Naive thymus-derived CD4-positive, alpha-beta T cell (primary cell): ENCODE measurements at regions of chr19 and their contacts with region 1.

Region 1: GRCh38 chr19:45469132-45469944 is 1.5 kb downstream of the FOSB start:
- DNase-seq: peak; percentile 79 to 98 (median 97)
- ATAC-seq: peak; percentile 70
- H3K4me3 ChIP-seq: peak overlapping the region; percentile 99
- H3K4me3 Mint-ChIP-seq: peak overlapping the region; percentile 87 to 96 (median 94)
- H3K27ac ChIP-seq: peak overlapping the region; percentile 98
- H3K27ac Mint-ChIP-seq: peak overlapping the region; percentile 90 to 100 (median 99)
- H3K4me1 ChIP-seq: peaks cover 10 to 16% of the 10 kb centered on the region in 2 donors
- H3K4me1 Mint-ChIP-seq: peaks cover 5 to 39% (median 19%) of the 10 kb centered on the region in 7 donors
- H3K27me3 ChIP-seq: no peaks in the 10 kb centered on the region
- H3K27me3 Mint-ChIP-seq: peaks cover 9 to 57% (median 17%) of the 10 kb centered on the region in 5 donors

Region 2: DNA sequence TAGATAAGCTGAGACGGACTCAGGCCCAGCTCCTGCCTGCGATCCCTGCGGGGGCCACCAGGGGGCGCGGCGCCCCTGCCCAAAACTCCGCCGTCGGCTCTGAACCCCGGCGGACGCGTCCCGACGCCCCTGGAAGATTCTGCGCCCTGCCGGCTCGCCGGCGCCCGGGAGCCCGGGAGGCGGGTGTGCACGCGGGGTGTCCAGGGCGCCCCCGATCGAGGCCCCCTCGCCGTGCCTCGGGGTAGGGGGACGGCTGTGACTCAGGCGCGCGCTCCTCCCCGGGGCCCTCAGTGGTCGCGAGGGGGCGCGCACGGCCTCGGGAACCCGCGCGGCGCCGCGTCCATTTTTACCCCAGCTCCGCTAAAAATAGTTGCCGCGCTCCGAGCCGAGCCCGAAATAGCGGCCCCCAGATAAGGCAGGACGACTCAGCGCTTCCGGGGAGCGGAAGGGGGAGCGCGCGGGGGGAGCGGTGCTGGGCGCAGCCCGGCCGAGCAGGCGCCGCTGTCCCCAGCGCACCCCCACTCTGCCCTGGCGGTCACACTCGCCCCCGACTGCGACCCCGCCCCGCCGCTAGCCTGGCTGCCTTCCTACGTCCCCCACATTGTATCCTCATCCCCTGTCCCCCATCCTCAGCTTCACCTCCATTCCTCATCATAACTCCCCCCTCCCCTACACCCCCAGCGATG is 29.6 kb before region 1 on chr19:
- CTCF ChIA-PET with region 1: interaction called, 217 read pairs
- POLR2A ChIA-PET with region 1: interaction called, 7 read pairs
- intact Hi-C with region 1: loop called (anchors 1 kb)
- DNase-seq: peak; percentile 75 to 95 (median 86)
- ATAC-seq: peak; percentile 72
- H3K4me3 ChIP-seq: peak overlapping the region; percentile 57
- H3K4me3 Mint-ChIP-seq: peak overlapping the region; percentile 68 to 83 (median 77)
- H3K27ac ChIP-seq: peak overlapping the region; percentile 69
- H3K27ac Mint-ChIP-seq: peak overlapping the region in 4 of 9 donors; percentile 51 to 91 (median 74)
- H3K4me1 ChIP-seq: peaks cover 24% of the 10 kb centered on the region in 2 donors
- H3K4me1 Mint-ChIP-seq: peaks cover 26 to 35% (median 33%) of the 10 kb centered on the region in 7 donors
- H3K27me3 ChIP-seq: no peaks in the 10 kb centered on the region
- H3K27me3 Mint-ChIP-seq: peaks cover 0 to 5% (median 0%) of the 10 kb centered on the region in 5 donors

Region 3: GRCh38 chr19:45446320-45446763 is 23.0 kb before region 1 on chr19:
- CTCF ChIA-PET with region 1: interaction called, 217 read pairs
- POLR2A ChIA-PET with region 1: interaction called, 14 read pairs
- intact Hi-C with region 1: loop called (anchors 1 kb)
- DNase-seq: no peak
- ATAC-seq: no peak
- H3K4me3 ChIP-seq: no peak overlapping the region
- H3K4me3 Mint-ChIP-seq: peak overlapping the region in 4 of 10 donors; percentile 21 to 56 (median 31)
- H3K27ac ChIP-seq: no peak overlapping the region
- H3K27ac Mint-ChIP-seq: peak overlapping the region in 6 of 9 donors; percentile 44 to 89 (median 64)
- H3K4me1 ChIP-seq: peaks cover 29 to 34% of the 10 kb centered on the region in 2 donors
- H3K4me1 Mint-ChIP-seq: peaks cover 30 to 67% (median 56%) of the 10 kb centered on the region in 7 donors
- H3K27me3 ChIP-seq: no peaks in the 10 kb centered on the region
- H3K27me3 Mint-ChIP-seq: peaks cover 0 to 6% (median 0%) of the 10 kb centered on the region in 5 donors

Region 4: DNA sequence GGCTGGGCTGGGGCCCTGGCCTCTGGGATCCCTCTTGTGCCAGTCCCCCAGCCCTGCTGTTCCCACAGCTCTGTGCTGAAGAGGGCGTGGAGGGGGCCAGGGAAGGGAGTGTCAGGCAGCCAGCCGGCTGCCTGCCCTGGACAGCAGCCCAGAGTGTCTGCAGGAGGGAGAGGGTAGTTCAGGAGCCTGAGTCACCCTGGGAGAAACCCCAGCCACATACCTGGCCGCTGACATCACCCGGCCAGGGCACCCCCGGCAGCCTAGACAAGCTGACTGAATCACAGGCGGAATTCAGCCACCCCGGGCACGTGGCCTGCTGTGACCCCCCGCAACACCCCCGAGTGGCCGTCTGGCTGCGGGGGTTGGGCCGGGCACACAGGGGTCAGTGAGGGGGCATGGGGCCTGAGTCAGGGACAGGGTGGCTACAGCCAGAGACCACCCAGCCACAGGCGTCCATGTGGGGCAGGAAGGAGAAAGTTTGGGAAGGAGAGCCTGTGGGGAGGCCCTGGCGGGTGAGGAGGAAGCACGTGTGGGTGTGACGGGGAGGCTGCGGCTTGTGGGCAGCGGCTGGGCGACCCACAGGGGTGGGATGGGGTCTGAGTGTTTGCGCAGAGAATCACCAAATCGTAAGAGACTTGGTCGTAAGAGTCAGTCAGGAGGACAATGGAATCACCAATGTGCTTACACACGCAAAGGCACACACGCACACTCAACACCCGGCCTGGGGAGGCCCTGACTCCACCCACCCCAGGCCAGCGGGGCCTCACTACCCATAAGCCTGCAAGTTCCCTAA is 13.4 kb before region 1 on chr19:
- CTCF ChIA-PET with region 1: interaction called, 7 read pairs
- POLR2A ChIA-PET with region 1: interaction called, 9 read pairs
- intact Hi-C with region 1: loop called (anchors 1 kb)
- DNase-seq: peak in 3 of 9 donors; percentile 23 to 70 (median 58)
- ATAC-seq: peak; percentile 74
- H3K4me3 ChIP-seq: no peak overlapping the region
- H3K4me3 Mint-ChIP-seq: peak overlapping the region in 6 of 10 donors; percentile 16 to 49 (median 32)
- H3K27ac ChIP-seq: no peak overlapping the region
- H3K27ac Mint-ChIP-seq: peak overlapping the region in 6 of 9 donors; percentile 14 to 84 (median 56)
- H3K4me1 ChIP-seq: peaks cover 17 to 30% of the 10 kb centered on the region in 2 donors
- H3K4me1 Mint-ChIP-seq: peaks cover 26 to 39% (median 31%) of the 10 kb centered on the region in 7 donors
- H3K27me3 ChIP-seq: no peaks in the 10 kb centered on the region
- H3K27me3 Mint-ChIP-seq: peaks cover 0 to 39% (median 0%) of the 10 kb centered on the region in 5 donors